ENCODE measurements at regions of chr4 and their contacts with region 1.

Region 1: GRCh38 chr4:113547487-113548042 is 214.0 kb downstream of the CAMK2D start:
- DNase-seq: peak; percentile 68
- H3K4me3 ChIP-seq: no peak overlapping the region
- CTCF ChIP-seq: peak; percentile 87

Region 2: DNA sequence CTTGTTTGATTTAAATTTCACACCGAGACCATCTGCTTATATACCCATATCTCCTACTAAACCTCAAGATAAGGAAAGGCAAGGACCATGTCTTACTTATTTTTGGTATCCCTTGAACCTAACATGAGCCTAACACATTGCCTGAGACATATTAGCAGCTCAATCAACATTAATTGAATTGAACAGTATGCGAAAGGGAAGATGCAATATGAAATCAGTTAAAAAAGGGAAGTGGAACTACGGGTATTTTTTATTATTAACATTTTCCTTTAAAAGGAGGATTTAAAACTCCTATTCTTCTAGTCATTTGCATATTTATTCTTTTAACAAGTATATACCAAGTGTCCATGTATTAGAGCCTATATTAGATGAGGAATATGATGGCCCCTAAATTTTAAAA is 16.9 kb after region 1 on chr4:
- CTCF ChIA-PET with region 1: interaction called, 51 read pairs
- POLR2A ChIA-PET with region 1: no interaction called
- DNase-seq: no peak
- H3K4me3 ChIP-seq: no peak overlapping the region
- CTCF ChIP-seq: no peak

Region 3: DNA sequence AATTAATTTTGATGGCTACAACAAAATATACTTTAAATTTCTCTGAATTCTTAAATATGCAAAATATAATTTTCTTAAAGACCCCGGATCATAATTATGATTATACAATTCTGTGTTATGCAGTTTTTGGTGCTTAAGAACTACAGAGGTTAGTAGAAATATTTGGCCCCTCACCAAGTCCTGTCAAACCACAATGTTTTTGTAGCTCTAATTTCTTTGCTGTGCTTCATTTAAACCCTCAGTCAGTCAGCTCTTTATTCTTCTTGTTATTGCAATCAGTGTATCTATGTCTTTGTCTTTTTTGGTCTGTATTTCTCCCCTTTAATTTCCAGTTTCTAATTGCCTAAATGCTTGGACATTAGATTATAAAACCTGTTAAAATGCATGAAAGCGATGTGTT is 27.8 kb after region 1 on chr4:
- CTCF ChIA-PET with region 1: interaction called, 14 read pairs
- POLR2A ChIA-PET with region 1: no interaction called
- DNase-seq: no peak
- H3K4me3 ChIP-seq: no peak overlapping the region
- CTCF ChIP-seq: no peak

Region 4: DNA sequence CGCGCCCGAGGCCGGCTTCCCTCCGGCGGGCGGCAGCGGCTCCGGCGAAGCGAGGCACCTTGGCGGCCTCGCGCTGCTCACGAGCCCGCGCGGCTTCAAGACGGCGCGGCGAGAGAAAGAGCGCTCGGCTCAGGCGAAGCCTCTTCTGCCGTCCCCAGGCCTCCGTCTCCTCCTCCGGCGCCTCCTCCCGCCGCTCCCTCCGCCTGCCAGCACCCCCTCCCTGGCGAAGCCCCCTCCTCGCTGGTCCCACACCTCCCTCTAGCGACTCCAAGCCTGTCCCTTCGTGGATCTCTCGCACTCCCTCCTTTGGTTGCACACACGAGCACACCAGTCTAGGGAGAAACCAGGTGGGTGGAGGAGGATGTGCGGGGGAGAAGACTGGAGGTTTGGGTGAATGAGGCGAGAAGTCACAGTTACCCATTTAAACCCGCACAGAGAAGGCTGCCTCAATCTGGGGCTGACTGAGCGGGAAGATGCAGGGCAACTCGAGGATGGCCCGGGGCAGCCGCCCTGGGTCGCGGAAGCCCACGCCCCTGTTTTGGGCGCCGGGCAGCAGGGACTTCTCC is 214.1 kb after region 1 on chr4 and contains the start of gene CAMK2D:
- CTCF ChIA-PET with region 1: interaction called, 12 read pairs
- POLR2A ChIA-PET with region 1: interaction called, 4 read pairs
- DNase-seq: no peak
- H3K4me3 ChIP-seq: peak within 1 kb of the TSS; percentile 90
- CTCF ChIP-seq: peak; percentile 82

Region 5: GRCh38 chr4:114250439-114250891 is 702.9 kb after region 1 on chr4:
- CTCF ChIA-PET with region 1: no interaction called
- POLR2A ChIA-PET with region 1: no interaction called
- DNase-seq: no peak
- H3K4me3 ChIP-seq: no peak overlapping the region
- CTCF ChIP-seq: no peak